ENCODE measurements at regions of chr10 and their contacts with region 1.

Region 1: GRCh38 chr10:33927347-33927746 is 592.9 kb upstream of the NRP1 start:
- DNase-seq: peak; percentile 56
- H3K4me3 ChIP-seq: no peak overlapping the region
- H3K27ac ChIP-seq: peak overlapping the region; percentile 35
- H3K4me1 ChIP-seq: peaks cover 44% of the 10 kb centered on the region
- H3K27me3 ChIP-seq: no peaks in the 10 kb centered on the region
- CTCF ChIP-seq: no peak

Region 2: GRCh38 chr10:32400961-32401360 is 1526.4 kb before region 1 on chr10:
- CTCF ChIA-PET with region 1: no interaction called
- POLR2A ChIA-PET with region 1: no interaction called
- intact Hi-C with region 1: loop called (anchors 2 kb)
- DNase-seq: peak; percentile 96
- H3K4me3 ChIP-seq: no peak overlapping the region
- H3K27ac ChIP-seq: peak overlapping the region; percentile 97
- H3K4me1 ChIP-seq: peaks cover 22% of the 10 kb centered on the region
- H3K27me3 ChIP-seq: no peaks in the 10 kb centered on the region
- CTCF ChIP-seq: no peak

Region 3: DNA sequence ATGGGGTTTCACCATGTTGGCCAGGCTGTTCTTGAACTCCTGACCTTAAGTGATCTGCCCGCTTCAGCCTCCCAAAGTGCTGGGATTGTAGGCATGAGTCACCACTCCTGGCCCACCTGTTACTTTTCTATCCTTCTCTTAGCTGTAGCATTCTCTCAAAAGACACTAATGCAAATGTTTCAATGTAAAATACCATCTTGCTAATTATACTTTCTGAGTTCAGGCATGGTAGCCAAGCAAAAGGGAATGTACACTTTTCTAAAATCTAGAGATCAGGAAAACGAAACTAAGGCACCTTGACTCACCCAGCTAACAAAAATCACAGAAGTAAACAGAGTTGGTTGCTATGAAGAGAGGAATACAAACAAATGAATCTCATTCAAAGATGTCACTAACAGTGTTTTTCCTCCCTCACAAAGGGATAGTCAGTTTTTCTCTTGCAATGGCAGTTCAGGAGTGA is 191.9 kb before region 1 on chr10:
- CTCF ChIA-PET with region 1: no interaction called
- POLR2A ChIA-PET with region 1: interaction called, 18 read pairs
- intact Hi-C with region 1: no loop called
- DNase-seq: no peak
- H3K4me3 ChIP-seq: no peak overlapping the region
- H3K27ac ChIP-seq: no peak overlapping the region
- H3K4me1 ChIP-seq: peaks cover 5% of the 10 kb centered on the region
- H3K27me3 ChIP-seq: no peaks in the 10 kb centered on the region
- CTCF ChIP-seq: no peak

Region 4: DNA sequence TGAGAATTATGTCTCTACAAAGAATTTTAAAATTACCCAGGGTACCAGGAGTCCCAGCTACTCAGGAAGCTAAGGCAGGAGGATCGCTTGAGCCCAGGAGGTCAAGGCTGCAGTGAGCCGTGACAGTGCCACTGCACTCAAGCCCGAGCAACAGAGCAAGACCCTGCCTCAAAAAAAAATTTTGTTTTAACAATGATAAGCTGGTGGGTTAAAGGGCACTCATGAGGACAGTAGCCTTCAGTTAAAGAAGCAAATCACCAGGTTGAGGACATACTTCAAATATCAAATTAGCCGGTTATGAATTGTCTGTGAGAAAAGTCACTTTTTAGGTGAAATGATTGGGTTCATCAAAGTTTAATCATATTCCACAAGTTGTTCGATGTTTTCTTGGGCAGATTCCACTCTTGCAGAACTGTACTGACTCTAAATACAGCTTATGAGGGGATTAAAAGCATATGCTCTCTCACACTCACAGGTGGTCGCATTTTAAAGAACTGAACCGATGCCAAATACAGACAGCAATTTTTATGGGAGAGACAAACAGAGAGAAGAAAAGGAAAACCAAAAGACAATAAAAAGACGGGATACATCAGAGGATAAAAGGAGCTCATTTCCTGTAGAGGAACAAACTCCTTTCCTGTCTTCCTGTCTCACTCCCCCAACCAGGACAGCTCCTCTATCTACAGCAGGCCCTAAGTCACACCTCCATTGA is 10.1 kb before region 1 on chr10:
- CTCF ChIA-PET with region 1: no interaction called
- POLR2A ChIA-PET with region 1: interaction called, 38 read pairs
- intact Hi-C with region 1: no loop called
- DNase-seq: peak; percentile 84
- H3K4me3 ChIP-seq: no peak overlapping the region
- H3K27ac ChIP-seq: peak overlapping the region; percentile 48
- H3K4me1 ChIP-seq: peaks cover 22% of the 10 kb centered on the region
- H3K27me3 ChIP-seq: no peaks in the 10 kb centered on the region
- CTCF ChIP-seq: no peak

Region 5: GRCh38 chr10:34297541-34298345 is 370.4 kb after region 1 on chr10:
- CTCF ChIA-PET with region 1: no interaction called
- POLR2A ChIA-PET with region 1: interaction called, 19 read pairs
- intact Hi-C with region 1: no loop called
- DNase-seq: no peak
- H3K4me3 ChIP-seq: no peak overlapping the region
- H3K27ac ChIP-seq: no peak overlapping the region
- H3K4me1 ChIP-seq: no peaks in the 10 kb centered on the region
- H3K27me3 ChIP-seq: no peaks in the 10 kb centered on the region
- CTCF ChIP-seq: no peak

Region 6: DNA sequence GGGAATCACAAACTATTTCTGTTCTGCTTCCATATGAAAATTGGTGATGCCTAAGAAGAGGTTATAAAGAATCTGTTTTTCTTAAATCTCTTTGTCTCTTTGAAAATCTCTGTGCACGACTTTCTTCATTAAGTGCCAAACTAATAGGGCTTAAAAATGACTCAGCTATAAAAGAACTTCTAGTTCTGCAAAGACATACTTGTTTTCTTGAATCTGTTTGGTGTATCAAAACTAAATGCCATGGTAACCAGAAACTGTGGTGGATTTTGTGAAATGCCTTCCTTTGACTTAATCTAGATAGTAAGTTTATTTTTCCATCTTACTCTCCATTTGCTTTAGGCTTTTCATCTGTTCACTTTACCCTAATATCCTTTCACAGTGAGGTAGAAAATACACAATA is 470.0 kb after region 1 on chr10:
- CTCF ChIA-PET with region 1: no interaction called
- POLR2A ChIA-PET with region 1: no interaction called
- intact Hi-C with region 1: loop called (anchors 5 kb)
- DNase-seq: peak; percentile 27
- H3K4me3 ChIP-seq: no peak overlapping the region
- H3K27ac ChIP-seq: no peak overlapping the region
- H3K4me1 ChIP-seq: peaks cover 17% of the 10 kb centered on the region
- H3K27me3 ChIP-seq: no peaks in the 10 kb centered on the region
- CTCF ChIP-seq: no peak